CD4-positive, alpha-beta memory T cell (primary cell): ENCODE measurements at regions of chr1 and their contacts with region 1.

Region 1: GRCh38 chr1:226062558-226063223 is at the start of gene H3-3A:
- DNase-seq: peak; percentile 98
- H3K4me3 ChIP-seq: peak within 1 kb of the TSS; percentile 77 to 84
- H3K4me3 Mint-ChIP-seq: peak within 1 kb of the TSS; percentile 99 to 100 (median 100)
- H3K27ac ChIP-seq: peak within 1 kb of the TSS; percentile 89
- H3K27ac Mint-ChIP-seq: peak within 1 kb of the TSS; percentile 96 to 100 (median 99)
- H3K4me1 ChIP-seq: peaks cover 47% of the 10 kb centered on the region
- H3K4me1 Mint-ChIP-seq: peaks cover 31 to 63% (median 43%) of the 10 kb centered on the region in 4 donors
- H3K27me3 ChIP-seq: no peaks in the 10 kb centered on the region
- H3K27me3 Mint-ChIP-seq: peaks cover 0 to 2% of the 10 kb centered on the region in 2 donors
- total RNA-seq, gene H3-3A: 391 to 397 TPM

Region 2: GRCh38 chr1:224434691-224435317 is 1627.9 kb before region 1 on chr1 and contains the start of gene WDR26:
- CTCF ChIA-PET with region 1: no interaction called
- POLR2A ChIA-PET with region 1: no interaction called
- intact Hi-C with region 1: loop called (anchors 5 kb)
- DNase-seq: peak; percentile 85 to 93 (median 87)
- H3K4me3 ChIP-seq: peak within 1 kb of the TSS; percentile 73 to 96
- H3K4me3 Mint-ChIP-seq: peak within 1 kb of the TSS; percentile 93 to 97 (median 97)
- H3K27ac ChIP-seq: peak within 1 kb of the TSS; percentile 94
- H3K27ac Mint-ChIP-seq: peak within 1 kb of the TSS; percentile 97 to 99 (median 99)
- H3K4me1 ChIP-seq: peaks cover 57% of the 10 kb centered on the region
- H3K4me1 Mint-ChIP-seq: peaks cover 39 to 69% (median 49%) of the 10 kb centered on the region in 4 donors
- H3K27me3 ChIP-seq: no peaks in the 10 kb centered on the region
- H3K27me3 Mint-ChIP-seq: no peaks in the 10 kb centered on the region
- total RNA-seq, gene WDR26: 121 to 123 TPM

Region 3: GRCh38 chr1:225467193-225468020 is 595.3 kb before region 1 on chr1:
- CTCF ChIA-PET with region 1: no interaction called
- POLR2A ChIA-PET with region 1: interaction called, 28 read pairs
- intact Hi-C with region 1: no loop called
- DNase-seq: peak; percentile 83 to 89 (median 85)
- H3K4me3 ChIP-seq: peak overlapping the region; percentile 74 to 85
- H3K4me3 Mint-ChIP-seq: peak overlapping the region; percentile 90 to 94 (median 92)
- H3K27ac ChIP-seq: peak overlapping the region; percentile 84
- H3K27ac Mint-ChIP-seq: peak overlapping the region; percentile 92 to 98 (median 97)
- H3K4me1 ChIP-seq: peaks cover 48% of the 10 kb centered on the region
- H3K4me1 Mint-ChIP-seq: peaks cover 27 to 63% (median 45%) of the 10 kb centered on the region in 4 donors
- H3K27me3 ChIP-seq: no peaks in the 10 kb centered on the region
- H3K27me3 Mint-ChIP-seq: no peaks in the 10 kb centered on the region

Region 4: GRCh38 chr1:225923692-225924555 is 138.8 kb before region 1 on chr1 and contains the start of gene PYCR2:
- CTCF ChIA-PET with region 1: no interaction called
- POLR2A ChIA-PET with region 1: interaction called, 11 read pairs
- intact Hi-C with region 1: no loop called
- DNase-seq: peak; percentile 93 to 96 (median 95)
- H3K4me3 ChIP-seq: peak within 1 kb of the TSS; percentile 94 to 96
- H3K4me3 Mint-ChIP-seq: peak within 1 kb of the TSS; percentile 90 to 97 (median 94)
- H3K27ac ChIP-seq: peak within 1 kb of the TSS; percentile 85
- H3K27ac Mint-ChIP-seq: peak within 1 kb of the TSS; percentile 90 to 97 (median 95)
- H3K4me1 ChIP-seq: peaks cover 68% of the 10 kb centered on the region
- H3K4me1 Mint-ChIP-seq: peaks cover 13 to 52% (median 28%) of the 10 kb centered on the region in 4 donors
- H3K27me3 ChIP-seq: no peaks in the 10 kb centered on the region
- H3K27me3 Mint-ChIP-seq: no peaks in the 10 kb centered on the region
- total RNA-seq, gene PYCR2: 102 to 116 TPM

Region 5: GRCh38 chr1:226051356-226051755 is 11.3 kb before region 1 on chr1:
- CTCF ChIA-PET with region 1: interaction called, 8 read pairs
- POLR2A ChIA-PET with region 1: interaction called, 20 read pairs
- intact Hi-C with region 1: no loop called
- DNase-seq: no peak
- H3K4me3 ChIP-seq: no peak overlapping the region
- H3K4me3 Mint-ChIP-seq: no peak overlapping the region
- H3K27ac ChIP-seq: no peak overlapping the region
- H3K27ac Mint-ChIP-seq: peak overlapping the region in 1 of 7 donors; percentile 47
- H3K4me1 ChIP-seq: no peaks in the 10 kb centered on the region
- H3K4me1 Mint-ChIP-seq: peaks cover 0 to 4% (median 1%) of the 10 kb centered on the region in 4 donors
- H3K27me3 ChIP-seq: no peaks in the 10 kb centered on the region
- H3K27me3 Mint-ChIP-seq: no peaks in the 10 kb centered on the region

Region 6: GRCh38 chr1:226109829-226110248 is 47.1 kb after region 1 on chr1:
- CTCF ChIA-PET with region 1: interaction called, 38 read pairs
- POLR2A ChIA-PET with region 1: interaction called, 41 read pairs
- intact Hi-C with region 1: no loop called
- DNase-seq: peak; percentile 54 to 79 (median 70)
- H3K4me3 ChIP-seq: peak overlapping the region; percentile 11 to 54
- H3K4me3 Mint-ChIP-seq: peak overlapping the region; percentile 90 to 94 (median 92)
- H3K27ac ChIP-seq: peak overlapping the region; percentile 59
- H3K27ac Mint-ChIP-seq: peak overlapping the region; percentile 76 to 94 (median 88)
- H3K4me1 ChIP-seq: peaks cover 13% of the 10 kb centered on the region
- H3K4me1 Mint-ChIP-seq: peaks cover 5 to 21% (median 11%) of the 10 kb centered on the region in 4 donors
- H3K27me3 ChIP-seq: no peaks in the 10 kb centered on the region
- H3K27me3 Mint-ChIP-seq: no peaks in the 10 kb centered on the region

Region 7: GRCh38 chr1:226308723-226309315 is 246.1 kb after region 1 on chr1 and contains the start of gene LIN9:
- CTCF ChIA-PET with region 1: no interaction called
- POLR2A ChIA-PET with region 1: interaction called, 11 read pairs
- intact Hi-C with region 1: no loop called
- DNase-seq: peak; percentile 85 to 91 (median 87)
- H3K4me3 ChIP-seq: peak within 1 kb of the TSS; percentile 84 to 85
- H3K4me3 Mint-ChIP-seq: peak within 1 kb of the TSS; percentile 91 to 95 (median 92)
- H3K27ac ChIP-seq: peak within 1 kb of the TSS; percentile 70
- H3K27ac Mint-ChIP-seq: peak within 1 kb of the TSS; percentile 78 to 93 (median 89)
- H3K4me1 ChIP-seq: peaks cover 10% of the 10 kb centered on the region
- H3K4me1 Mint-ChIP-seq: peaks cover 12 to 20% (median 15%) of the 10 kb centered on the region in 4 donors
- H3K27me3 ChIP-seq: no peaks in the 10 kb centered on the region
- H3K27me3 Mint-ChIP-seq: peaks cover 5 to 7% of the 10 kb centered on the region in 2 donors
- total RNA-seq, gene LIN9: 5.0 to 5.5 TPM

Region 8: GRCh38 chr1:226390326-226391080 is 327.8 kb after region 1 on chr1:
- CTCF ChIA-PET with region 1: no interaction called
- POLR2A ChIA-PET with region 1: no interaction called
- intact Hi-C with region 1: no loop called
- DNase-seq: no peak
- H3K4me3 ChIP-seq: no peak overlapping the region
- H3K4me3 Mint-ChIP-seq: no peak overlapping the region
- H3K27ac ChIP-seq: no peak overlapping the region
- H3K27ac Mint-ChIP-seq: peak overlapping the region in 1 of 7 donors; percentile 29
- H3K4me1 ChIP-seq: no peaks in the 10 kb centered on the region
- H3K4me1 Mint-ChIP-seq: peaks cover 6 to 22% (median 13%) of the 10 kb centered on the region in 4 donors
- H3K27me3 ChIP-seq: no peaks in the 10 kb centered on the region
- H3K27me3 Mint-ChIP-seq: no peaks in the 10 kb centered on the region

Region 9: GRCh38 chr1:227766015-227766630 is 1703.4 kb after region 1 on chr1:
- CTCF ChIA-PET with region 1: no interaction called
- POLR2A ChIA-PET with region 1: no interaction called
- intact Hi-C with region 1: no loop called
- DNase-seq: peak; percentile 83 to 93 (median 84)
- H3K4me3 ChIP-seq: peak overlapping the region in 1 of 2 donors; percentile 37
- H3K4me3 Mint-ChIP-seq: peak overlapping the region; percentile 73 to 88 (median 77)
- H3K27ac ChIP-seq: peak overlapping the region; percentile 34
- H3K27ac Mint-ChIP-seq: peak overlapping the region; percentile 84 to 96 (median 92)
- H3K4me1 ChIP-seq: peaks cover 67% of the 10 kb centered on the region
- H3K4me1 Mint-ChIP-seq: peaks cover 54 to 79% (median 67%) of the 10 kb centered on the region in 4 donors
- H3K27me3 ChIP-seq: no peaks in the 10 kb centered on the region
- H3K27me3 Mint-ChIP-seq: no peaks in the 10 kb centered on the region